ENCODE measurements at regions of chr4 and their contacts with region 1.

Region 1: DNA sequence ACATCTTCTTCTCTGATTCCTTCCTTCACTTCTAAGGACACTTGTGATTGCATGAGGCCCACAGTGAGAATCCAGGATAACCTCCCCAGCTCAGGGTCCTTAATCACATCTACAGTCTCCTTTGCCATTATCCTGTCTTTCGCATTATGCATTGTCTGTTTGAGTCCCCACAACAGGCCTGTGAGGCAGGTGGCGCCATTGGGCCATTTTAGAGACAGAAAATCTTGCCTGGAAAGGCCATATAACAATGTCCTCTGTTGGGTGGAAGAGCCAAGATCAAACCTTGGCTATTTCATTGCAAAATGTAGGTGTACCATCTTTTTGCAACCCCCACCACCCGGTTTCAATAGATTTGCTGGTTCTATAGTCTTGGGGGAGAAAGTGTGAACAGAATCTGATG is 11.8 kb upstream of the DCUN1D4 start:
- DNase-seq: peak; percentile 36
- H3K4me3 ChIP-seq: peak overlapping the region in 1 of 2 experiments; percentile 16; a peak in 1 of 4 replicates
- H3K27ac ChIP-seq: no peak overlapping the region
- H3K4me1 ChIP-seq: peaks cover 0 to 7% of the 10 kb centered on the region in 2 experiments; a peak in 2 of 4 replicates
- H3K27me3 ChIP-seq: no peaks in the 10 kb centered on the region
- CTCF ChIP-seq: peak; percentile 74
- EP300 ChIP-seq: no peak
- RAD21 ChIP-seq: peak; percentile 92

Region 2: DNA sequence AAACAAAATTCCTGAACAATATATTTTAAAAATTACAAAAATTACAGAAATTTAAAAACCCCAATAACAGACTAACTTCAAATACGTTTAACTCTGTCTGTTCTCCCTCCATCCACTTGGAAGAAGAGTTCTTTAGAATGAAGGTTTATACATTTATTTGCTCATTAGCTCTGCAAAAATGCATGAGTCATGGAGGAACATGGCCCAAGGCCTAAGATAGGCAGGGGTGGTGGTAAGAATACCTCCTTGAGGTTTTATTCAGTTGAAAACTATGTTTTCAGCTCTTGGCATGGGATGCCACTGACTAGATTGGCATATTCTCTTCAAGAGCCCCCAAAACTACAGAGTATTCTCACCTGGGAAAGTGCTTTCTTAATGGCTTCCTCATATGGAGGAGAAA is 197.8 kb after region 1 on chr4:
- CTCF ChIA-PET with region 1: interaction called, 15 read pairs
- POLR2A ChIA-PET with region 1: no interaction called
- DNase-seq: no peak
- H3K4me3 ChIP-seq: no peak overlapping the region
- H3K27ac ChIP-seq: peak overlapping the region in 1 of 2 experiments; percentile 32; a peak in 2 of 4 replicates
- H3K4me1 ChIP-seq: 0 out of 4 replicates have a peak, but pooled peaks cover 0 to 4% of the 10 kb centered on the region in 2 experiments
- H3K27me3 ChIP-seq: no peaks in the 10 kb centered on the region
- CTCF ChIP-seq: no peak
- EP300 ChIP-seq: no peak; a peak in 1 of 4 replicates
- RAD21 ChIP-seq: no peak